ENCODE measurements at regions of chr5 and their contacts with region 1.

Region 1: DNA sequence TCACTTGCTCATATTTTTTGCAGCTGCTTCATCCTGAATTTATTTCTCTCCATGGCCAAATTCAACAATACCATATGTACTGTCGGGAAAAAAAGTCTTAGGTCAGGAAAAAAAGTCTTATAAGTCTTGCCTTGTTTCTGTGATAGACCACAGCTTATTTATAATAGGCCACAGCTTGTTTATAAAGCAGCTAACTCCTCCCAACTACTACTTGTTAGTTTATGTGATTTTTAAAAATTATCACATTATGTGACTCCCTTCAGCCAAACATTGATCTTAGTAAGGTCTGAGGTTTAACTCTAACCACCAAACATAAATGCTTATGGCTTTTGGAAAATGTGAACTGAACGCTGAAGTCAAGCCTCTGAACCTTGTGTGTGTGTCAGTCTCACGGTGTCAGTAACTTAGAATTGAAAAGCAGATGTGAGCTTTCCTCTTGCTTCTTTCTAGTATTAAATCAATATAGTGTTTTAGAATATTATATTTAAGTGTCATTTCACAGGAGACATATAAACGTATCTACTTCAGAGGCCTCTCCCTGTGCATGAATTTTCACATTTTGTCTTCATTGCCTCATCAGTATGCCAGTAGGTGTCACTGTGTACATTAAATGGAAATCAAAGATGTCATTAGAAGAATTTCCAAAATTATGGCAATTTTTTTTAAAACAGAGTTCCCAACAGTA is 51.3 kb downstream of the SNX24 start:
- DNase-seq: no peak
- ATAC-seq: no peak

Region 2: GRCh38 chr5:123164054-123164453 is 267.3 kb after region 1 on chr5:
- intact Hi-C with region 1: no loop called
- DNase-seq: no peak
- ATAC-seq: peak; percentile 34

Region 3: GRCh38 chr5:123273984-123274383 is 377.2 kb after region 1 on chr5:
- intact Hi-C with region 1: loop called (anchors 10 kb)
- DNase-seq: no peak
- ATAC-seq: no peak

Region 4: GRCh38 chr5:123344816-123345426 is 448.2 kb after region 1 on chr5:
- intact Hi-C with region 1: loop called (anchors 10 kb)
- DNase-seq: no peak
- ATAC-seq: no peak